Left colon (tissue), 2 donors: ENCODE measurements at regions of chr16 and their contacts with region 1.

Region 1: GRCh38 chr16:23826528-23827045 is 9.2 kb upstream of the PRKCB start:
- DNase-seq: no peak
- ATAC-seq: no peak

Region 2: DNA sequence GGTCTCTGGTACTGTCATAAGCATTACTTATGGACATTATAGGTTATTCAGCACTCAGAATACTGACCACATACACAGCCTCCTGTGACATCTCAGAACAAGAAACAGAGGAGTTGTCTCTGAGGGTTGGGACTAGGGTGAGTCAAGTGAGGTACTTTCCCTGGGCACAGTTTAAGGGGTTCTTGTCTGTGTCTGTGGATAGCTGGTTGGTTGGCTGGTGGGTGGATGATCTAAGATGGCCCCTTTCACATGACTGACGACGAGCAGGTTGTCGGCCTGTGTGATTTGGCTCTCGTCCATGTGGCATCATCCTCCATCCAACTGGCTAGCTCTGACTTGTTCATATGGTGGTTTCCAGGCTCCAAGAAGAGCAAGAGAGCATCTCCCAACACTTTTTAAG is 173.1 kb after region 1 on chr16:
- intact Hi-C with region 1: loop called in 1 of 2 experiments (anchors 10 kb)
- DNase-seq: no peak
- ATAC-seq: no peak